Posterior vena cava (tissue), 2 donors: ENCODE measurements at regions of chr3 and their contacts with region 1.

Region 1: GRCh38 chr3:197144188-197144587 is 114.6 kb upstream of the MELTF start:
- DNase-seq: no peak

Region 2: DNA sequence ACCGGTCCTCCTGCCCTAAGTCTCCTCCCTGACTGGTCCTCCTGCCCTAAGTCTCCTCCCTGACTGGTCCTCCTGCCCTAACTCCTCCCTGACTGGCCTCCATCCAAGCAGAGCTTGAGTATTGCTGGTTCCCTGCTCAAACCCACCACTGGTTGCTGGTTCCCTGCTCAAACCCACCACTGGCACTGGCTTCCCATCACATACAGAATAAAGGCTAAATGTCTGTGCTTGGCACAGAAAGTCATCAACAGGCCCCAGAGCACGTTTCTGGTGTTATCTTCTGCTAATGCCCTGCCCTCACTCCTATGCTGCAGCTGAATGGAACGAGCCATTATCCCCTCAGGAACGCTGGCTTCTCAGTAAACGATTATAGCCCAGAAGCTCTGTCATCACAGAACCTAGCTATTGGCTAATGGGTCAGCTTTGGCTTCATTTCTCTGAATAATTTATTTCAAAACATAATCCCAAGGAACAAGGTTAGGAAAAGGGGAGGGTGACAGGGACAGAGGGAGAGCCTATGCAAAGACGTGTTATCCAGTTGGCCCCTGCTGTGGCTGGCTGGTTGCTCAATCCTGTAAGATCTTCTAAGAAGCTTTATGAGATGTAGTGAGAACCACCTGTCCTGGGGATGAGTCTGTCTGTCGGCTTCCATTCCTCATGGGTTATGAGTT is 1429.7 kb before region 1 on chr3:
- intact Hi-C with region 1: loop called in 1 of 2 experiments (anchors 5 kb)
- DNase-seq: no peak

Region 3: GRCh38 chr3:196547067-196547466 is 597.1 kb before region 1 on chr3:
- intact Hi-C with region 1: no loop called
- DNase-seq: no peak